ENCODE measurements at regions of chr13 and their contacts with region 1.

Region 1: DNA sequence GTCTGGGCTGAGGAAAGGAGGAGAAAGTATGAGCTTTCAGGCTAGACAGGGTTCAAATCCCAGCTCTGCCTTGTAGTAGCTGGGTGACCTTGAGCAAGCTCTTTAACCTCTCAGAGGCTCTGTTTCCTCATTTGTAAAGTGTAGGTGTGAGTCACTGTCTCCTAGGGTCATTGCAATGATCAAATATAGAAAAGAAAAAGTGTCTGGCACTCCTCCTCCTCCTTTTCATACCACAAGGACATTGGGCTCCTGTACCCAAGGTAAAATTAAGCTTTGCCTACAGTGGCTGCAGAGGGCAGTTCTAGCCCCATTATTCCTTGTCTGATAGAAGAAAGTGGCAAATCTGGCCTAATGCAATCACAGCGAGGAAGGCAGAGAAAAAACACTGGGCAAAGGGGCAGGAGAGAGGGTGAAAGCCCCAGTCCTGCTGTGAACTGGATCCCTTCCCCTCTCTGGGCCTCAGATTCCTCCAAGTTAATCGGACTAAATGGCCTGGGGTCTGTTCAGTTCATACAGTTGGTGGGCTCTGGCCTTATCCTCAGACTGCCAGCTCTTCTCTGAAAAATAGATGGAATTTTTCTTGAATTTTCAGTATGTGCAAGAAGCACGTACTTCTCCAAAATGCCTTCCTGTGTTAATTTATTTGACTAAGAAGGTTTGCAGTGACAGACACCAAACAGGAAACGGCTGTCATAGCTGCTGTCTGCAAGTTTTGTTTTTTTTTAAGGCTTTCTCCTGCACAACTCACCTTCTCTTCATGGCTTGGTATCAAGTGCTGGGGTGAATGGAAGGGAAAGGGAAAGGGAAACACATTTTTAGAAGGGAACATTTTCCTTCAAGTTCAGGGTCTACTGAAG is 35.3 kb downstream of the RGCC start:
- DNase-seq: peak; percentile 79
- H3K4me3 Mint-ChIP-seq: peak overlapping the region; percentile 73
- H3K27ac Mint-ChIP-seq: peak overlapping the region; percentile 93
- H3K4me1 Mint-ChIP-seq: peaks cover 62% of the 10 kb centered on the region
- H3K27me3 Mint-ChIP-seq: no peaks in the 10 kb centered on the region

Region 2: GRCh38 chr13:41512441-41512840 is 19.8 kb after region 1 on chr13:
- intact Hi-C with region 1: no loop called
- DNase-seq: peak; percentile 52
- H3K4me3 Mint-ChIP-seq: no peak overlapping the region
- H3K27ac Mint-ChIP-seq: no peak overlapping the region
- H3K4me1 Mint-ChIP-seq: no peaks in the 10 kb centered on the region
- H3K27me3 Mint-ChIP-seq: no peaks in the 10 kb centered on the region

Region 3: DNA sequence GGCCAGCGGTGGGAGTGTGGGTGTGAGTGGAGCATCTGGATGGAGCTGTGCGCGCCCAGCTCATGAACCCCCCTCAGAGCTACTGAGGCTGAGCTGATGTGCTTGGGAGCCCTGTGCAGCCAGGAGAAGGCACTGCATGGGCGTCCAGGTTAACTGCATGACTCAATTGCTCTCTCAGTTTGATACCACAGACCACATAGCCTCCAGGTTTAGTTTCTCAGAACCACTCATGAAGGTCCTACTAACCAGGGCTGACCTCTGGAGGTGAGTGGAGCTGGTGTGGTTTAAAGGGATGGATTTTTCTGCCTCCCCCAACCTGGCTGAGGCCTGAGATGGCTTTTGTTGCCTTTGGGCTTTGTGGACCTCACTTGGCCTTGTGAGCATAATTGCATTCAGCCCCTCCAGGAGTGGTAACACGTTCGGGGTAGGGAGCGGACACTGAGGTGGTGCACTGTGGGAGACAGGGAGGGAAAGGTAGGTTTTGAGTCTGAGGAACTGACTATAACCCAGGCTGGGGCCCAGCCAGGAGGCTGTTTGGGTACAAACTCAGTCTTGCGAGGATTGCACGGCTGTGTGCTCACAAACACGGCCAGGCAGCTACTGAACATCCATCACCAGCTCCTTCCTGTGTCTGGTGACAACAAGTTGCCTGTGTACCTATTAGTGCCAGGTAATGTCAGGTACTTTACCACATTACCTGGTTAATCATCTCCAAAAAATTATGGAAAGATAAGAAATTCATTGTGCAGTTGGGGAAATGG is 62.2 kb after region 1 on chr13:
- intact Hi-C with region 1: loop called (anchors 2 kb)
- DNase-seq: peak; percentile 67
- H3K4me3 Mint-ChIP-seq: peak overlapping the region; percentile 31
- H3K27ac Mint-ChIP-seq: peak overlapping the region; percentile 25
- H3K4me1 Mint-ChIP-seq: peaks cover 15% of the 10 kb centered on the region
- H3K27me3 Mint-ChIP-seq: no peaks in the 10 kb centered on the region

Region 4: DNA sequence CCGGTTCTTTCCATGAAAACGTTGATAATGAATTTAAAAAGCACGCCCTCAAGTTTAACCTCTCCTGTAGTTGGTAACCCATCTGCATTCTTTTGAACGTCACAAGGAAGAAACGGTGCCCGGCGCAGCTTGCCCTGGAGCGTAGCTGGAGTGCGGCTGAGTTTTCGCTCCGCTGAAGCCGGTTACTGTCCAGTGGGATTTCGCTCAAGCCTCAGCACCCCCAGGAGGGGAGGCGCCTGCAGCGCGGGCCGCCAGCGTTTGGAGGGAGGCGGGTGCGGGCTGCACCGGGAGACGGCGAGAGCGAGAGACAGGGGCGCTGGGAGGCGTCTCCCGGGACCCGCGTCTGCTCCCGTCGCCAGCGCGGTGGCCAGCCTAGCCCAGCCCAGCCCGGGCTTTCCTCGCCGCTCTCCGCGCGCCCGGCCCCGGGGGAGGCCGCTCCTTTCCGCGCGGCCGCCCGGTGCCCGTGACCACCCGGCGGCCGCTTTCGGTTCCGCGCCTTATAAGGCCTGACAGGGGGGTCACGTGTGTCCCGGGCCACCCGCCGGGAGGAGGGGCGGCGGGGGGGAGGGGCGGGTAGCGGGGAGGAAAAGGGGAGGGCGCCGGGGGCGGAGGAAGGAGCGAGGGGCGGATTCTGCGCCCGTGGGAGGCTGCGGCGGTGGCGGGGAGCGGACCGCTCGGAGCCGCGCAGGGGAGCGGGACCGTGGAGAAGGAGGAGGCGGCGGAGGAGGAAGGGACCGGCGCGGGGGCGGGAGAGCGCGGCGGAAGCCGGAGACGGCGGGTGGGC is 547.5 kb after region 1 on chr13:
- intact Hi-C with region 1: no loop called
- DNase-seq: peak; percentile 95
- H3K4me3 Mint-ChIP-seq: peak overlapping the region; percentile 84
- H3K27ac Mint-ChIP-seq: peak overlapping the region; percentile 83
- H3K4me1 Mint-ChIP-seq: peaks cover 19% of the 10 kb centered on the region
- H3K27me3 Mint-ChIP-seq: peaks cover 31% of the 10 kb centered on the region